ENCODE measurements at regions of chr11 and their contacts with region 1.

Region 1: GRCh38 chr11:74398244-74399159 is at the start of gene PGM2L1:
- DNase-seq: peak; percentile 95
- H3K4me3 Mint-ChIP-seq: peak within 1 kb of the TSS; percentile 98
- H3K27ac Mint-ChIP-seq: peak within 1 kb of the TSS; percentile 99
- H3K4me1 Mint-ChIP-seq: peaks cover 39% of the 10 kb centered on the region
- H3K27me3 Mint-ChIP-seq: no peaks in the 10 kb centered on the region
- total RNA-seq, gene PGM2L1: 11.9 to 13.4 TPM

Region 2: GRCh38 chr11:73779084-73779902 is 619.2 kb before region 1 on chr11:
- CTCF ChIA-PET with region 1: no interaction called
- intact Hi-C with region 1: loop called (anchors 1 kb)
- DNase-seq: peak; percentile 99
- H3K4me3 Mint-ChIP-seq: peak overlapping the region; percentile 85
- H3K27ac Mint-ChIP-seq: peak overlapping the region; percentile 98
- H3K4me1 Mint-ChIP-seq: peaks cover 14% of the 10 kb centered on the region
- H3K27me3 Mint-ChIP-seq: no peaks in the 10 kb centered on the region

Region 3: GRCh38 chr11:74170694-74171629 is 227.5 kb before region 1 on chr11 and contains the starts of genes C2CD3 and PPME1:
- CTCF ChIA-PET with region 1: no interaction called
- intact Hi-C with region 1: loop called (anchors 1 kb)
- DNase-seq: peak; percentile 99
- H3K4me3 Mint-ChIP-seq: no peak within 1 kb of the TSS
- H3K27ac Mint-ChIP-seq: no peak within 1 kb of the TSS
- H3K4me1 Mint-ChIP-seq: peaks cover 17% of the 10 kb centered on the region
- H3K27me3 Mint-ChIP-seq: no peaks in the 10 kb centered on the region
- total RNA-seq, gene C2CD3: 21.3 to 23.1 TPM
- total RNA-seq, gene PPME1: 19.0 to 22.1 TPM

Region 4: DNA sequence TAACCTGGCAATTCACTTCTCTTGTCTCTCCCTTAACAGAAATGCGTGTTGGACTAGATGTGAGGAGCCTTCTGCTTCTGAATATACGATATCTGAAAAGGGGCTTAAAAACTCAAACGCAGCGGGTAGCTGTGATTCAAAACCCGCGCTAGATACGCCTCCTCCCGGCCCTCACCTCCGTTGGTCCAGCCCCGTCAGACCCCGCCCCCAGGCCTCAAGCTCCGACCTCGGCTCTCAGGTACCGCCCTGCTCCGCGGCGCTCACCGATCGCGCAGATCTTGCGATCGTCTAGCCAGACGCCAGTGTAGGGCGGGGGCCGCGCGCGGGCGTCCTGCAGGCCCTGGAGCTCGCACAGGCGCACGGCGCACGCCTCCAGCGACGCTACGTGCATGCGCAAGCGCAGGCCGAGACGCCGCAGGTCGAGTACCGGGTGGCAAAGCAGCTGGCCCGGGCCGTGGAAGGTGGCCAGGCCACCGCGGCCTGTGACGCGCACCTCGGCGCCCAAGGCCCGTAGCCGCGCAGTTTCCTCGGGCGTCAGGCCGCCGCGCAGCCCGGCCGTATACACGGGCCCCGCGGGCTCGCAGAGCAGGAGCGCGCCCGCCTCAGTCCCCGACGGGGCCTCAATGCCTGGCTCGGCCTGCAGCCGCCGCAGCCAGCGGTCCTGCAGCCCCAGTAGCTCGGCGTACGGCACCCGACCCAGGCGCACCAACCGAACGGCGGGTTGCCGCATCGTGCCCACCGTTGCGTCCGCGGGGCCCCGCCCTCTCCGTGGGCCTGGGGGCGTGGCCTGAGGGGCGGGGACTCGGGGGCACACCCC is 94.7 kb after region 1 on chr11 and contains the start of gene LIPT2:
- CTCF ChIA-PET with region 1: no interaction called
- intact Hi-C with region 1: loop called (anchors 1 kb)
- DNase-seq: peak; percentile 99
- H3K4me3 Mint-ChIP-seq: peak within 1 kb of the TSS; percentile 83
- H3K27ac Mint-ChIP-seq: peak within 1 kb of the TSS; percentile 95
- H3K4me1 Mint-ChIP-seq: peaks cover 17% of the 10 kb centered on the region
- H3K27me3 Mint-ChIP-seq: no peaks in the 10 kb centered on the region
- total RNA-seq, gene LIPT2: 3.1 to 5.6 TPM

Region 5: DNA sequence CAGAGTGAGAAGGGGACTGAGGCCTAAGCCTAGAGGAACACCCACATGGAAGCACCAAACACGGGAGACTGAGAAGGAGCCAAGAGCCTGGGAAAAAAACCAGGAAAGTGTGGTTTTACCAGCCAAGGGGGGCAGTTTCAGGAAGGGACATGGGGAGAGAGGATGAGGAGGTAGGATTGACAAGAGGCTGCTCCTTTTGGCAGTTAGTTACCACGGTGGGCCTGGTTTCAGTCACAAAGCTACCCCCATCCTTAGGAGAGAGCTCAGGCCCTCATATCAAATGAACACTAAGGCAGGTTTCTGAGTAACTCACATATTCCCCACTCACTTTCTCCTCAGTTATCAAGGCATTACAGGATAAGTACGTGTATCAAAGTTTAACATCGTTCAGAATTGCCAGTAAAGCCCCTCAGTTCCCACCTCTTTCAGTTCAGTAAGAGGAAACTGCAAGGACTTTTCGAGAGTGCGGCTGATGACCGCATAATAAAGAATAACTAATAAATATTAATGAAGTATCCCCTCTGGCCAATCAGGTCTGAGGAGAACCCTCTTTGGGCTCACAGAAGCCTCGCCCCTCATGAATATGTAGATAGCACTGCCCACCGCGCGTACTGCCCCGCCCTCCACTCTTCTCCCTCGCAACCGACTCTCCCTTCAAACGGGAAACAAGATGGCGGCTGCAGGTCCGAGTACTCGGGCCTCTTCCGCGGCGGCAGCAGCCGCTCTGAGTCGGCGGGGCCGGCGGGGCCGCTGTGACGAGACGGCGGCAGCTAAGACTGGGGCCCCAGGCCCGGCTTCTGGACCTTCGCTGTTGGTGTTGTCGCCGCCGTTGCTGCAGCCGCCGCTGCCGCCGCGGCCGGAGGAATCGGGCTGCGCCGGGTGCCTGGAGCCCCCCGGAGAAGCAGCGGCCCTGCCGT is 350.0 kb after region 1 on chr11 and contains the start of gene RNF169:
- CTCF ChIA-PET with region 1: interaction called, 4 read pairs
- intact Hi-C with region 1: loop called (anchors 2 kb)
- DNase-seq: peak; percentile 94
- H3K4me3 Mint-ChIP-seq: peak within 1 kb of the TSS; percentile 83
- H3K27ac Mint-ChIP-seq: peak within 1 kb of the TSS; percentile 71
- H3K4me1 Mint-ChIP-seq: peaks cover 42% of the 10 kb centered on the region
- H3K27me3 Mint-ChIP-seq: no peaks in the 10 kb centered on the region
- total RNA-seq, gene RNF169: 15.8 to 16.0 TPM

Region 6: GRCh38 chr11:75337195-75337654 is 938.7 kb after region 1 on chr11:
- CTCF ChIA-PET with region 1: no interaction called
- intact Hi-C with region 1: loop called (anchors 10 kb)
- DNase-seq: no peak
- H3K4me3 Mint-ChIP-seq: no peak overlapping the region
- H3K27ac Mint-ChIP-seq: peak overlapping the region; percentile 92
- H3K4me1 Mint-ChIP-seq: peaks cover 92% of the 10 kb centered on the region
- H3K27me3 Mint-ChIP-seq: no peaks in the 10 kb centered on the region